Activated naive CD4-positive, alpha-beta T cell treated with anti-CD3 and anti-CD28 coated beads for 36 hours (primary cell): ENCODE measurements at regions of chr9 and their contacts with region 1.

Region 1: GRCh38 chr9:100856238-100856637 is 172.3 kb upstream of the PLPPR1 start:
- DNase-seq: no peak
- H3K4me3 Mint-ChIP-seq: no peak overlapping the region
- H3K27ac Mint-ChIP-seq: no peak overlapping the region
- H3K4me1 Mint-ChIP-seq: no peaks in the 10 kb centered on the region
- H3K27me3 Mint-ChIP-seq: no peaks in the 10 kb centered on the region

Region 2: DNA sequence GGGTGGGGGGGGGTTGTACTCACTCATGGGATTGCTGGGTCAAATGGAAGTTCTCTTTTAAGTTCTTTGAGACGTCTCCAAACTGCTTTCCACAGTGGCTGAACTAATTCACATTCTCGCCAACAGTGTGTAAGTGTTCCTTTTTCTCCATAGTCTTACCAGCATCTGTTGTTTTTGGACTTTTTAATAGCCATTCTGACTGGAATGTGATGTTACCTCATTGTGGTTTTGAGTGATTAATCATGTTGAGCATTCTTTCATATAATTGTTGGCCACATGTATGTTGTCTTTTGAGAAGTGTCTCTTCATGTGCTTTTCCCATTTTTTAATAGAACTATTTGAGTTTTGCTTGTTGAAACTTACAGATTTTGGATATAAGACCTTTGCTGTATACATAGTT is 77.4 kb after region 1 on chr9:
- CTCF ChIA-PET with region 1: no interaction called
- intact Hi-C with region 1: loop called (anchors 2 kb)
- DNase-seq: no peak
- H3K4me3 Mint-ChIP-seq: no peak overlapping the region
- H3K27ac Mint-ChIP-seq: no peak overlapping the region
- H3K4me1 Mint-ChIP-seq: no peaks in the 10 kb centered on the region
- H3K27me3 Mint-ChIP-seq: peaks cover 3% of the 10 kb centered on the region